ENCODE measurements at regions of chr3 and their contacts with region 1.

Region 1: DNA sequence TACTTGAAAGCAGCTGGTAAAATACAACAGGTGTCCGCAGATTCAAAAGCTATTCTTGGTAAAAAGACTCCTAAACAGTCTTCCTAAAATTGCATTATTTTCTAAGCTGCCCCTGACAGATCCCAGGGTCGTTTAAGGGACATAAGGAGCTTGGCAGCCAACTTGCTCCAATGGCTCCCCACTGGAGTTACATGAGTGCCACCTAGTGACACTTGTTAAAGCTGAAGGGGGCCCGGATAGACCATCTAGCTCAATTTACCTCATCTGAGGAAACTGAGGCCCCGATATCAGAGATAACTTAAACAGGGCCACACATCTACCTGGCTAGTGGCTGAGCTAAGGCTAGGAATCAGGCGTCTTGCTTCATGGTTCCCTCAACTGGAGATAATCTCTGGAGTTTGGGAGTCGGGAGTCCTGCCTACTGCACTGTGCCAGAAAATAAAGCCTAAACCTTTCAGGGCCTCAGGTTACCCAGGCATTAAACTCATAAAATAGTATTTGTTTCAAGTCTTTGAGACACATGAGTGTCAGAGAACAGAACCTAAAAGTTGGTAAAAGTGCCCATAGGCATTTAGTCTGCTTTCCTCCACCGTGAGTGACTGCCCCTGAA is 6.5 kb upstream of the TBC1D23 start:
- H3K4me3 Mint-ChIP-seq: no peak overlapping the region
- H3K27ac Mint-ChIP-seq: no peak overlapping the region
- H3K4me1 Mint-ChIP-seq: no peaks in the 10 kb centered on the region
- H3K27me3 Mint-ChIP-seq: no peaks in the 10 kb centered on the region

Region 2: DNA sequence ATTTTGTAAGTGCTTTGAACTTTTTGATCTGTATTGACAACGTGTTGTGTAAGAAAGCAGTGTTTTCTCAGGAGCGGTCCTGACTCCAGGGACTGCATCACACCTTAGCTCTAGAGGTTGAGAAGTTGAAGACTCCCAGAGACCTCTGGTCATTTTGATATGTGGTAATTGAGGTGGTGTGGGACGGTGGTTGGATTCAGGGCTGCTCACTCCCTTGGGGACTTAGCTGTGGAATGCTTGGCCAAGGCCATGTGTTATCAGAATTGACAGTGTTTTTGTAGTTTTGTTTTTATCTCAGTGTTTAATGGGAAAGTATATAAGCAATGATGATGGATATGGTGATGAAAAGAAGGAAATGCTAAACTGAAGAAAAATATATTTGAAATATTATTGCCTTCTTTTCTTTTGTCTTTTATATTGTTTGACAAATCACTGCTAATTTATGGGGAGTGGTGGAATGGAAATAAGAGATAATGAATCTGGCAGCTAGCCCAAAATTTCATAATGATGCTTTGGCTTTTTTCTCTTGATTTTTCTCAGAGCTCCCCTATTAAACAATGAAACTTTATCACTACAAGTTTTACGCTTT is 420.6 kb before region 1 on chr3:
- intact Hi-C with region 1: loop called (anchors 1 kb)
- H3K4me3 Mint-ChIP-seq: no peak overlapping the region
- H3K27ac Mint-ChIP-seq: no peak overlapping the region
- H3K4me1 Mint-ChIP-seq: peaks cover 4% of the 10 kb centered on the region
- H3K27me3 Mint-ChIP-seq: no peaks in the 10 kb centered on the region

Region 3: GRCh38 chr3:99842826-99843589 is 411.3 kb before region 1 on chr3:
- intact Hi-C with region 1: loop called (anchors 1 kb)
- H3K4me3 Mint-ChIP-seq: no peak overlapping the region
- H3K27ac Mint-ChIP-seq: no peak overlapping the region
- H3K4me1 Mint-ChIP-seq: peaks cover 23% of the 10 kb centered on the region
- H3K27me3 Mint-ChIP-seq: no peaks in the 10 kb centered on the region

Region 4: GRCh38 chr3:100068826-100069225 is 185.4 kb before region 1 on chr3:
- intact Hi-C with region 1: loop called (anchors 1 kb)
- H3K4me3 Mint-ChIP-seq: no peak overlapping the region
- H3K27ac Mint-ChIP-seq: no peak overlapping the region
- H3K4me1 Mint-ChIP-seq: peaks cover 31% of the 10 kb centered on the region
- H3K27me3 Mint-ChIP-seq: peaks cover 1% of the 10 kb centered on the region

Measured in dendritic cell treated with granulocyte-macrophage colony-stimulating factor and Interleukin-4, amounts not matched to agents 40 ng/mL and 50 ng/mL, for 4 days (primary cell).